A673 (cell line): ENCODE measurements at regions of chr21 and their contacts with region 1.

Region 1: DNA sequence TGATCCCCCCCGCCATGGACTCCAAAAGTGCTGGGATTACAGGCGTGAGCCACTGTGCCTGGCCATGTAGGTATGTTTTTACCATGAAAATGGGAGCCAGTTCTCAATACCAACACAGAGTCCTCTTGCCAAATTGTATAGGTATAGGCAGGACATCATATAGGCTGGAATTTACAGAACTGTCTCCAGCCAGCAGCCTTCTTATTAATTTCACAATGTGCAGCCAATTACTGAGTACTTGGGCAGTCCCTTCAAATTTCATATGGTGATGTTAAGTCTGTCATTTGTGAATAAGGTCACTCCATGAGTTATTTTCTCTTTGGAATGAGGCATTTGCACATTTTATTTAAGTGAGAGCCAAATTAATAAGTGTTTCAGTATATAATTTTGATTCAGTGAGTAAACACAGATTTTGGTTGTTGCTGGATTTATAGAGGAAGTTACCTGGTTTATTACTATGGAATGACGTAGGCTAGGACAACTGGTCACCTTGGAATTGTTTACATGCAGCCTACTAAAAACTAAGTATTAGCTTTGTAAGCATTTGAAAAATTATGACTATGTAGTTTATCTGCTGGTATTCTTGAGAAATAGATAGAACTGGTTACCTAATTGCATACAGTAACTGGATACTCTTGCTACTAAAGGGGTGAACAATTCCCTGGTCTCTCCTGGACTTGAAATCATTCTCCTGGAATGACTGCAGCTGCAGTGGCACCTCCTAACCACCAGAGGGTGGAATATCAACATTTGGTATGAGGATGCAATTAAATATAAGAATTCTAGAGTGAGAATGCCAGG is 3.1 kb upstream of the KRTAP27-1 start:
- DNase-seq: peak; percentile 50
- H3K4me3 ChIP-seq: no peak overlapping the region
- H3K27ac ChIP-seq: no peak overlapping the region
- H3K4me1 ChIP-seq: no peaks in the 10 kb centered on the region
- H3K27me3 ChIP-seq: no peaks in the 10 kb centered on the region
- CTCF ChIP-seq: peak; percentile 84

Region 2: GRCh38 chr21:30283404-30283803 is 57.2 kb before region 1 on chr21:
- CTCF ChIA-PET with region 1: no interaction called
- POLR2A ChIA-PET with region 1: no interaction called
- intact Hi-C with region 1: no loop called
- DNase-seq: no peak
- H3K4me3 ChIP-seq: no peak overlapping the region
- H3K27ac ChIP-seq: no peak overlapping the region
- H3K4me1 ChIP-seq: no peaks in the 10 kb centered on the region
- H3K27me3 ChIP-seq: peaks cover 10% of the 10 kb centered on the region
- CTCF ChIP-seq: no peak

Region 3: DNA sequence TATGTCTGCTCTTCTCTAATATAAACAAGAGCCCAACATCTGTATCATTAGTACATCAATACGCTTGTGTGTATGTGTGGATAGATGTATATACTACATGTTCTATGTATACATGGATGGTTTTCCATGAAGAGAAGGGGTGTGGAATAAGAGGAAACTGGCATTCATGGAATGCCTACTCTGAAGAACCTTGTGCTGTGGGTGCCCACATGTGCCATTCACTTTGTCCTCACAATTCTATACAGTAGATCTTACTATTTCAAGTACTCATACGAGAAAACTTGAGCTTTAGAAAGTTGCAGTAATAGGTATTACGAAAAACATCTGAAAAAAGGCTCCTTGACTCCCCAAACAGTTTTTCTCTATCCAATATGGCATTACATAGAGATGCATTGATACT is 18.9 kb before region 1 on chr21:
- CTCF ChIA-PET with region 1: no interaction called
- POLR2A ChIA-PET with region 1: no interaction called
- intact Hi-C with region 1: no loop called
- DNase-seq: no peak
- H3K4me3 ChIP-seq: no peak overlapping the region
- H3K27ac ChIP-seq: no peak overlapping the region
- H3K4me1 ChIP-seq: no peaks in the 10 kb centered on the region
- H3K27me3 ChIP-seq: no peaks in the 10 kb centered on the region
- CTCF ChIP-seq: no peak

Region 4: GRCh38 chr21:30408782-30409494 is 68.3 kb after region 1 on chr21:
- CTCF ChIA-PET with region 1: no interaction called
- POLR2A ChIA-PET with region 1: no interaction called
- intact Hi-C with region 1: loop called (anchors 5 kb)
- DNase-seq: peak; percentile 91
- H3K4me3 ChIP-seq: no peak overlapping the region
- H3K27ac ChIP-seq: no peak overlapping the region
- H3K4me1 ChIP-seq: no peaks in the 10 kb centered on the region
- H3K27me3 ChIP-seq: no peaks in the 10 kb centered on the region
- CTCF ChIP-seq: peak; percentile 84

Region 5: GRCh38 chr21:30463713-30464112 is 123.1 kb after region 1 on chr21:
- CTCF ChIA-PET with region 1: no interaction called
- POLR2A ChIA-PET with region 1: no interaction called
- intact Hi-C with region 1: loop called (anchors 10 kb)
- DNase-seq: peak; percentile 21
- H3K4me3 ChIP-seq: no peak overlapping the region
- H3K27ac ChIP-seq: no peak overlapping the region
- H3K4me1 ChIP-seq: no peaks in the 10 kb centered on the region
- H3K27me3 ChIP-seq: no peaks in the 10 kb centered on the region
- CTCF ChIP-seq: peak; percentile 71

Region 6: DNA sequence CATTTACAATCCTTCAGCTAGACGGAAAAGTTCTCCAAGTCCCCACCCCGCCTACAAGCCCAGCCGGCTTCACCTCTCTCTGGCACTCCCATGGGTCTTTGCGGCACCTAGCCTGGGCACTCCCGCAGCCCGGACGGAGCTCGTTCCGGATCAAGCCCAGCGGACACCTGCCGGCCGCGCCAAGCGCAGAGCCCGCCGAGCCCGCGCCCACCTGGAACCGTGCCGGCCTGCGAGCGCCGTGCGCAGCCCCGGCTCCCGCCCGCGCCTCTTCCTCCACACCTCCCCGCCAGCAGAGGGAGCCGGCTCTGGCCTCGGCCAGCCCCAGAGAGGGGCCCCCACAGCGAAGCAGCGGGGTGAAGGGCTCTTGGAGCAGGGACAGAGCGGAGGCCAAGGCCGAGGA is 747.7 kb after region 1 on chr21:
- CTCF ChIA-PET with region 1: no interaction called
- POLR2A ChIA-PET with region 1: no interaction called
- intact Hi-C with region 1: loop called (anchors 2 kb)
- DNase-seq: no peak
- H3K4me3 ChIP-seq: no peak overlapping the region
- H3K27ac ChIP-seq: no peak overlapping the region
- H3K4me1 ChIP-seq: no peaks in the 10 kb centered on the region
- H3K27me3 ChIP-seq: peaks cover 6% of the 10 kb centered on the region
- CTCF ChIP-seq: 0 out of 2 replicates have a peak, but pooled peaks have one; percentile 11